ENCODE measurements at regions of chr22 and their contacts with region 1.

Region 1: DNA sequence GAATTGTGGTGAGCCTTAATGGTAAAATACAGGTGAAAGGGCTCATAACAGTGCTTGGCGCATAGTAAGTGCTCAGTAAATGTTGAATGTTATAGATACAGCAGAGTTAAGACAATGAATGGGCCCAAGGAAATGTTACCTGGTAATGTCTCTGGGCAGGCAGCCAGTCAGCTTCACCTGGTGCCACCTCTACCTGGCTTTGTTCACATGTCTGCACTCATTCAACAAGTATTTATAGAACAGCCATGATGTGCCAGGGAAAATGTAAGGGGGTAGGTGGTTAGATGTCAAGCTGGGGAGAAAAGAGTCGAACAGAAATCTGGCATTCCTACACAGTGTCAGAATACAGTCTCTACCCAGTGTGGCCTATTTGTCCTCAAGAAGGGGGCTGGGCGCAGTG is 238.8 kb upstream of the SYN3 start:
- DNase-seq: no peak
- H3K4me3 ChIP-seq: no peak overlapping the region
- CTCF ChIP-seq: no peak

Region 2: GRCh38 chr22:33467620-33468095 is 170.7 kb after region 1 on chr22:
- CTCF ChIA-PET with region 1: interaction called, 44 read pairs
- POLR2A ChIA-PET with region 1: no interaction called
- DNase-seq: no peak
- H3K4me3 ChIP-seq: no peak overlapping the region
- CTCF ChIP-seq: peak; percentile 19